PC-3 (cell line): ENCODE measurements at regions of chr1 and their contacts with region 1.

Region 1: DNA sequence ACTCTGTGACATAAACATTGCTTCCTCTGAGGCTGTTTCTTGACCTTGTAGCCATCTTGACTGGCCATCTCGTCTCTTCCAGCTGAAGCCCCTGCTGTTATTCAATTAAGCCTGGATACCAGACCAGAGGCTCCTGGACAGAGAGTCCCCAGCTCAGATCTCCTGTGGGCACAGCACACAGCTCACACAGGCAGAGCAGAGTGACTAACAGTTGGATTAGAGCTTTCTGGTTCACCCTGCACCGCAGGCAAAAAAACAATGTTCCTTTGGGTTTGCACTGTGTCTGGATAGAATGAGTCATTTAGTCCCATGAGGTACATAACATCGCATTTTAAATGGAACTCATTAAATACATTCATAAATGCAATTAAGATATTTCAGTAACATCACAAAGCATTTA is 33.4 kb upstream of the USH2A start:
- DNase-seq: peak; percentile 97
- ATAC-seq: peak; percentile 95
- H3K4me3 ChIP-seq: no peak overlapping the region
- H3K27ac ChIP-seq: peak overlapping the region; percentile 24
- H3K4me1 ChIP-seq: peaks cover 44% of the 10 kb centered on the region
- H3K27me3 ChIP-seq: no peaks in the 10 kb centered on the region
- CTCF ChIP-seq: no peak

Region 2: GRCh38 chr1:215507119-215507518 is 949.6 kb before region 1 on chr1:
- CTCF ChIA-PET with region 1: no interaction called
- POLR2A ChIA-PET with region 1: no interaction called
- intact Hi-C with region 1: no loop called
- DNase-seq: no peak
- ATAC-seq: no peak
- H3K4me3 ChIP-seq: no peak overlapping the region
- H3K27ac ChIP-seq: no peak overlapping the region
- H3K4me1 ChIP-seq: no peaks in the 10 kb centered on the region
- H3K27me3 ChIP-seq: no peaks in the 10 kb centered on the region
- CTCF ChIP-seq: no peak

Region 3: DNA sequence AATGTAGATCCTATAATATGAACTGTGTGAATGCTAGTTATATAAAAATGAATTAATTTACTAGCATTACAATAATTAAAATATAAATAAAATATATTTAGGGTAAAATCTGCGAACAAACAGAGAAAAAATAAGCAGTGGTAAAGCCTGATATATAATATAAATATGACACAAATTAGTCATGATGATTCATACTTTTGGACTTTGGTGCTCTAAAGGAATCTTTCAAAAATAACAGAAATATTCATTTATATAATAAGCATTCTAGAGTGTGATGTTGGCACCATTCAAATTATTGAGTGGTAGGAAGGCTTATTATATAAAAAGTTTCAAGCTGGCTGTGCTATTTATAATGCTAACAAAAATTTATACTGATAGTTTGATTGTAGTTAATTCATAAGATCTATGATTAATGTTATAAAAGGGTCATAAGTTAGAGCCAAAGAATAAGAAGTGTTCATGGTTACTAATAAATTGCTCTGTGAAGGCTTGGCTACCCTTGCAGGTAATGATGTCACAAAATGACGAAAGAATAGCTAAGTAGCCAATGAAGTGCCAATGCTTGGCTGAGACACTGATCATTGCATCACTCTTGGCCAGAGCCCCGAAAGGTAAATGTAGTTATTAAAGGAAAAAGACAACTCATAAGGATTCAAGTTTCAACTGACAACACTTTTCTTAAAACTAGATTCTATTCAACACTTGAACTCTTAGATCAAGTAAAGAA is 142.2 kb before region 1 on chr1:
- CTCF ChIA-PET with region 1: no interaction called
- POLR2A ChIA-PET with region 1: no interaction called
- intact Hi-C with region 1: no loop called
- DNase-seq: peak; percentile 89
- ATAC-seq: peak; percentile 82
- H3K4me3 ChIP-seq: no peak overlapping the region
- H3K27ac ChIP-seq: peak overlapping the region; percentile 55
- H3K4me1 ChIP-seq: peaks cover 16% of the 10 kb centered on the region
- H3K27me3 ChIP-seq: no peaks in the 10 kb centered on the region
- CTCF ChIP-seq: no peak

Region 4: GRCh38 chr1:216388558-216388957 is 68.1 kb before region 1 on chr1:
- CTCF ChIA-PET with region 1: no interaction called
- POLR2A ChIA-PET with region 1: no interaction called
- intact Hi-C with region 1: no loop called
- DNase-seq: no peak
- ATAC-seq: no peak
- H3K4me3 ChIP-seq: no peak overlapping the region
- H3K27ac ChIP-seq: no peak overlapping the region
- H3K4me1 ChIP-seq: peaks cover 4% of the 10 kb centered on the region; the same call in 1 of the 2 replicates
- H3K27me3 ChIP-seq: peaks cover 16% of the 10 kb centered on the region; the same call in 1 of the 2 replicates
- CTCF ChIP-seq: no peak

Region 5: GRCh38 chr1:216554934-216555333 is 98.3 kb after region 1 on chr1:
- CTCF ChIA-PET with region 1: no interaction called
- POLR2A ChIA-PET with region 1: no interaction called
- intact Hi-C with region 1: loop called (anchors 5 kb)
- DNase-seq: peak; percentile 52
- ATAC-seq: peak; percentile 55
- H3K4me3 ChIP-seq: no peak overlapping the region
- H3K27ac ChIP-seq: no peak overlapping the region
- H3K4me1 ChIP-seq: peaks cover 10% of the 10 kb centered on the region
- H3K27me3 ChIP-seq: no peaks in the 10 kb centered on the region
- CTCF ChIP-seq: no peak